Right ventricle myocardium inferior (tissue), 1 donor: ENCODE measurements at regions of chr21 and their contacts with region 1.

Region 1: GRCh38 chr21:42716074-42716473 is 62.7 kb downstream of the PDE9A start:
- DNase-seq: no peak
- ATAC-seq: no peak

Region 2: DNA sequence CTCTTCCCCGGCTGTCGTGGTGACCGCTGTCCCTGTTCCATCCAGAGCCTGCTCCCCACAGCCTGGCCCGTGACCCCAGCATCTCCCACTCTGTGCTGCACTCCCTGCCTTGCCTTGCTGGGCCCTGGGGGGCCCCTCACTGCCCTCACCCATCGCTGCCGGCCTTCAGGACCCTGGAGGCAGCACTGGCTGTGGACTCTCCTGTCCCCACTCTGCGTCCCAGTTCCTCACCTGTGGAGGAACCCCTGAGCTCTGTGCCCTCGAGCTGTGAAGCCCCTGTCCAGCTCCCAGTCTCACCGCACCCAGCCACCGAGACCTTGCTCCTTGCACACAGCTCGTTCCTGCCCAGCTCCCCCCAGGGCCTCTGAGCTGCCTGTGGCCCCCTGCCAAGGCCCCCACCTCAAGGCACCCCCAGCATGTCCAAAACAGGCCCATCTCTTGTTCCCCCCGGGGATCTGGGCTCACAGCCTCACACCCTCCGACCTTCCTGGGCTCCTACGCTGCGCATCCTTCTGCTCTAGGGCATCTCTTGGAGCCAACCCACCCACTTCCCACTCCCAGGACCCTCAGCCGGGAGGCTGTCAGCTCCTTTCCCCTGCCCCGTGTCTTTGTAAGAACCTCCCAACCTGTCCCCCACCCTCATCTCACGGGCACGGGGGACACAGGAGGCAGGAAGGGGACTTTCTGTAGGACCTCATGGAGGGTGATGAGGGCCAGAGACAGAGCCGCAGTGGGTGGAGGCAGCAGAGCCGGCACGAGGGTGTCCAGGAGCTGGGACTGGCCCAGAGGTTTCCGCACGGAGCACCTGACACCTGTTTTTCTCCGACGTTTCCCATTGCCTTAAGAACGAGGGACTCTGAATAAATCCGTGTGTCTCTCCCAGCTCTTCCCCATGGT is 54.0 kb after region 1 on chr21:
- intact Hi-C with region 1: loop called (anchors 5 kb)
- DNase-seq: no peak
- ATAC-seq: no peak